ENCODE measurements at regions of chr17 and their contacts with region 1.

Region 1: DNA sequence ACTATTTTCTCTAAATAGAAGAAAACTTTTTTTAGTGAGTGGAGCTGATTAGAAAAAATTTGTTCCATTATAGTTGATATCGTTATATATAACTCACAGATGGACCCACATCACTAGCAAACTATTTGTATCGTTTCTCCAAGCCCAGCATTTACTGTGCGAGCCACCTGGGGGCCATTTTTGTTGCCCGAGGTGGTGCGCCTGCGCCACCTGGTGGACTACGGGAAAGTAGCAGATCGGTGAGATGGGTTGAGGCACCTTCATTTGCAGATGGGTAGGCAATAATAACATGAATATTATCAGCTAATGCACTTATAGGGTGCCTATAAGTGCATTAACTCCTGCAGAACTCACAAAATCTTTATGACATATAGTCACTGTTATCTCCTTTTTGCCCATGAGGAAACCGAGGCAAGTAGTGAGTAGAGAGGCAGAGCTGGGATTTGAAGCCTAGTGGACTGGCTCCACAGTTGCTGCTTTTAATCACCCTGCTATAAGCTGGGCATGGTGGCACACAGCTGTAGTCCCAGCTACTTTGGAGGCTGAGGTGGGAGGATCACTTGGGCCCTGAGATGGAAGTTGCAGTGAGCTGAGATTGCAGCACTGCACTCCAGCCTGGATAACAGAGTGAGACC is 23.2 kb upstream of the NTN1 start:
- DNase-seq: peak in 1 of 2 donors; percentile 62
- ATAC-seq: peak in 5 of 8 donors; percentile 52 to 65 (median 59)
- H3K4me3 ChIP-seq: no peak overlapping the region
- H3K27ac ChIP-seq: no peak overlapping the region
- H3K4me1 ChIP-seq: peaks cover 0 to 10% (median 5%) of the 10 kb centered on the region in 9 donors
- H3K27me3 ChIP-seq: peaks cover 0 to 47% (median 16%) of the 10 kb centered on the region in 7 donors
- CTCF ChIP-seq: peak; percentile 62 to 97 (median 78)

Region 2: GRCh38 chr17:8820311-8821010 is 177.7 kb before region 1 on chr17:
- intact Hi-C with region 1: no loop called
- DNase-seq: no peak
- ATAC-seq: no peak
- H3K4me3 ChIP-seq: no peak overlapping the region
- H3K27ac ChIP-seq: no peak overlapping the region
- H3K4me1 ChIP-seq: no peaks in the 10 kb centered on the region
- H3K27me3 ChIP-seq: no peaks in the 10 kb centered on the region
- CTCF ChIP-seq: no peak

Region 3: GRCh38 chr17:9522074-9522473 is 524.0 kb after region 1 on chr17:
- intact Hi-C with region 1: loop called in 8 of 10 experiments (anchors 2 to 5 kb)
- DNase-seq: peak in 1 of 2 donors; percentile 23
- ATAC-seq: peak in 6 of 8 donors; percentile 64 to 76 (median 72)
- H3K4me3 ChIP-seq: no peak overlapping the region
- H3K27ac ChIP-seq: no peak overlapping the region
- H3K4me1 ChIP-seq: peaks cover 0 to 22% (median 6%) of the 10 kb centered on the region in 9 donors
- H3K27me3 ChIP-seq: no peaks in the 10 kb centered on the region
- CTCF ChIP-seq: peak in 7 of 9 donors; percentile 35 to 68 (median 62)

Region 4: GRCh38 chr17:9529033-9529700 is 531.1 kb after region 1 on chr17:
- intact Hi-C with region 1: loop called in 6 of 10 experiments (anchors 2 to 5 kb)
- DNase-seq: no peak
- ATAC-seq: peak in 1 of 8 donors; percentile 64
- H3K4me3 ChIP-seq: no peak overlapping the region
- H3K27ac ChIP-seq: no peak overlapping the region
- H3K4me1 ChIP-seq: no peaks in the 10 kb centered on the region
- H3K27me3 ChIP-seq: no peaks in the 10 kb centered on the region
- CTCF ChIP-seq: peak in 7 of 9 donors; percentile 23 to 62 (median 46)

Measured in heart right ventricle (tissue), 16 donors.